ENCODE measurements at regions of chrX and their contacts with region 1.

Region 1: GRCh38 chrX:70454441-70455365 is 10.1 kb downstream of the DLG3 start:
- DNase-seq: peak; percentile 52 to 70
- ATAC-seq: peak; percentile 76 to 94 (median 90)
- H3K4me3 ChIP-seq: peak overlapping the region; percentile 35 to 63 (median 54)
- H3K27ac ChIP-seq: peak overlapping the region; percentile 50 to 85 (median 75)
- H3K4me1 ChIP-seq: peaks cover 0 to 14% (median 0%) of the 10 kb centered on the region in 9 donors
- H3K27me3 ChIP-seq: peaks cover 0 to 44% (median 0%) of the 10 kb centered on the region in 7 donors
- CTCF ChIP-seq: peak; percentile 49 to 81 (median 74)

Region 2: DNA sequence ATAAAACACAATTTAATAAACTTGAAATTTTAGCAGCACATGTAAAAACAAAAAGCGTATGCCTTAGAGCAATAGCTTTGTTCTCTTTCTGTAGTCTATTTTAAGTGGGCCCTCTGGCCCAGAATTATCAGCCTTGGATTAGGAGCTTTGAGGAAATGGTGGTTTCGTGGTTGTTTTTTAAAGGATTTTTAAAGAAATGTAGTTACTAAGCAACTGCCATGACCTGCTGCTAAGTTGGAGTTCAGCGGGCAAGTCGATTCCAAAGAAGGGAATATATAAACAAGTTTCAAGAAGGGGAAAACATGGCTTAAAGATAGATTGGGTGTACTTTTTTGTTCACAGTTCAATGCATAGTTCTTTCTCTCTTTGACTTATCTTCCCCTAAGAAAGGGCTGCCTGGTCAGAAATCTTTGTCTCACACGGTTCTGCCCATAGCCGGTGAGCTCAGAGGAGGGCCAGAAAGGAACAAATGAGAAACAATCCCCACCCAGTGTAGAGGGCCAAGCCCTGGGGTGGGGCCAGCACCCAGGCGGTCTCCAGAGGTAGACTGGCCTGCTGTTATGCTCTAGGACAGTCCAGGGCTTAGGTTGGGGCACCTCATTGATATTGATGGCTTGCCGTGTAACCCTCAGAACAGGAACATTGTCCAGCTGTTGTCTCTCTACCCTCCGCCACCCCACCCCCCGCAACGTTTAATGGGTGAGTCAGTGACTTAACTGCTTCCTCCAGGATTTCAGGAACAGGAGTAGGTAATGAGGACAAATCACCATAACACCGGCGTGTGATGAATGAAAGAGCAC is 22.4 kb after region 1 on chrX:
- intact Hi-C with region 1: loop called in 3 of 10 experiments (anchors 2 kb)
- DNase-seq: peak in 1 of 2 donors; percentile 6
- ATAC-seq: peak in 6 of 8 donors; percentile 17 to 55 (median 38)
- H3K4me3 ChIP-seq: no peak overlapping the region
- H3K27ac ChIP-seq: peak overlapping the region in 8 of 10 donors; percentile 0 to 80 (median 52)
- H3K4me1 ChIP-seq: peaks cover 2 to 51% (median 27%) of the 10 kb centered on the region in 9 donors
- H3K27me3 ChIP-seq: peaks cover 0 to 64% (median 0%) of the 10 kb centered on the region in 7 donors
- CTCF ChIP-seq: no peak

Region 3: DNA sequence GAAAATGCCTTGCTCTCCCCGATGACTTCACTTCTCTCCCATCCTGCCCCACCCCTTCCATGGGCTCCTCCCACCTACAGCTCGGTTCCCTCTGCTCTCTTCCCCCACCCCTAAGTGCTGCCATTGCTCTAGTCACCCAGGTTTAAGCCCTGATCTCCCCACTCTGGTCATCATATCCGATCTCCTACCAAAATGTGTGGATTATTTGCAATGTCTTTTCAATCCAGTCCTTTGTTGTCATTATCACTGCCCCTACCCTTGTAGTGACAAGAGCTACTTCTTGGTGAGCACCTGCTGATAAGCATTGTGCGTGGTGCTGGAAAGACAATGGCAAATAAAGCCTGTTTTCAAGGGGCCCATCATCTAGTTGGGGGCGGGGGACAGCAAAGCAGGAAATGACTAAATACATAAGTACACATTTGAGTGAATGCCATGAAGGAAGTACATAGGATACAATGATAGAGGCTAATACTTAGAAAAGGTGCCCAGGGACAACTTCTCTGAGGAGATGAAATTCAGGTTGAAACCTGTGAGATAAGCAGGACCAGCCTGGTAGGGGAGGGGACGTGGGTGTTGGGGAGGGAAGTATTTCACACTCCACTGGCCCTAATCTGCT is 53.7 kb after region 1 on chrX:
- intact Hi-C with region 1: no loop called
- DNase-seq: no peak
- ATAC-seq: no peak
- H3K4me3 ChIP-seq: no peak overlapping the region
- H3K27ac ChIP-seq: no peak overlapping the region
- H3K4me1 ChIP-seq: no peaks in the 10 kb centered on the region
- H3K27me3 ChIP-seq: peaks cover 0 to 13% (median 0%) of the 10 kb centered on the region in 7 donors
- CTCF ChIP-seq: no peak

Region 4: DNA sequence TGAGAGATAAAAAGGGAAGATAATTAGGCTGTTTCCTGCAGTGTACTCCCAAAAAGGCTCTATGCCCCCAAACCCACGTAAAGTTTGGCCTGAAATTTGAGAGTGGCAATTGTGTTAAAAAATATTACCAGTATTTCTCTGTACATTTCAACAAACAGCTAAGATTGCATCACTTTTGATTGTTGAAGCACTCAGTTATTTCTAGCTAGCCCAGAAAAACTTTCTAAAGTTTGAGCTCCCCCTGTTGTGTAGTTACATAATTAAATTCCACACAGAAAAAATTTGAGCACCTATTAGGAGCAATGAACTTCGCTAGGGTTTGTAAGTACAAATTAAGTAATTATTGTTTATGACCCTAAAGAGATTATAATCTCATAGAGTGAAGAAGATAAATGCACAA is 99.4 kb after region 1 on chrX:
- intact Hi-C with region 1: loop called in 9 of 10 experiments (anchors 5 kb)
- DNase-seq: no peak
- ATAC-seq: no peak
- H3K4me3 ChIP-seq: no peak overlapping the region
- H3K27ac ChIP-seq: no peak overlapping the region
- H3K4me1 ChIP-seq: no peaks in the 10 kb centered on the region
- H3K27me3 ChIP-seq: peaks cover 0 to 12% (median 0%) of the 10 kb centered on the region in 7 donors
- CTCF ChIP-seq: peak in 6 of 9 donors; percentile 23 to 45 (median 29)

Region 5: DNA sequence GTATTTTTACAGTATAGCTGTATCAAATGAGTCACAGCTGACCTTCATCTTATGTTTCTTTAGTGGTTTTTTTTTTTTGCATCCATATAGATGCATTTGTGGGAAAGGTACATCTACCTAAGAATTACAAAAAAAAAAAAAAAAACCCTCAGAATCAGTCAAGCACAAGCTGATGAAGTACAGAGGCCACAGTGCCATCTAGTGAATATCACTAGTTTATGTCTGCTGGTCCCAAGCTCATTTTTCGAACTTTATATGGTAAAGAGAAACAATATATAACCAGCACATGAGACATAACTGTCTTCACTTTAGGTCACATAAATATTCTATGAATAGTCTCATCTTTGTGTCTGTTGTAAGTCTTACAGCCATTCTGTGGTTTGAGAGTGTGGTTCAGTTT is 210.0 kb after region 1 on chrX:
- intact Hi-C with region 1: loop called in 4 of 10 experiments (anchors 10 kb)
- DNase-seq: no peak
- ATAC-seq: no peak
- H3K4me3 ChIP-seq: no peak overlapping the region
- H3K27ac ChIP-seq: no peak overlapping the region
- H3K4me1 ChIP-seq: no peaks in the 10 kb centered on the region
- H3K27me3 ChIP-seq: peaks cover 0 to 32% (median 0%) of the 10 kb centered on the region in 7 donors
- CTCF ChIP-seq: peak in 6 of 9 donors; percentile 9 to 45 (median 29)

Measured in heart right ventricle (tissue), 16 donors.